Calu3 (cell line): ENCODE measurements at regions of chr18 and their contacts with region 1.

Region 1: GRCh38 chr18:74342416-74343043 is 26.9 kb downstream of the C18orf63 start:
- DNase-seq: peak; percentile 46
- H3K4me3 Mint-ChIP-seq: no peak overlapping the region
- H3K27ac Mint-ChIP-seq: peak overlapping the region; percentile 7
- H3K4me1 Mint-ChIP-seq: no peaks in the 10 kb centered on the region
- H3K27me3 Mint-ChIP-seq: no peaks in the 10 kb centered on the region
- CTCF ChIP-seq: peak; percentile 48

Region 2: GRCh38 chr18:72700961-72701718 is 1641.4 kb before region 1 on chr18:
- CTCF ChIA-PET with region 1: interaction called, 5 read pairs
- intact Hi-C with region 1: loop called (anchors 5 kb)
- DNase-seq: no peak
- H3K4me3 Mint-ChIP-seq: no peak overlapping the region
- H3K27ac Mint-ChIP-seq: no peak overlapping the region
- H3K4me1 Mint-ChIP-seq: no peaks in the 10 kb centered on the region
- H3K27me3 Mint-ChIP-seq: no peaks in the 10 kb centered on the region
- CTCF ChIP-seq: peak; percentile 54

Region 3: DNA sequence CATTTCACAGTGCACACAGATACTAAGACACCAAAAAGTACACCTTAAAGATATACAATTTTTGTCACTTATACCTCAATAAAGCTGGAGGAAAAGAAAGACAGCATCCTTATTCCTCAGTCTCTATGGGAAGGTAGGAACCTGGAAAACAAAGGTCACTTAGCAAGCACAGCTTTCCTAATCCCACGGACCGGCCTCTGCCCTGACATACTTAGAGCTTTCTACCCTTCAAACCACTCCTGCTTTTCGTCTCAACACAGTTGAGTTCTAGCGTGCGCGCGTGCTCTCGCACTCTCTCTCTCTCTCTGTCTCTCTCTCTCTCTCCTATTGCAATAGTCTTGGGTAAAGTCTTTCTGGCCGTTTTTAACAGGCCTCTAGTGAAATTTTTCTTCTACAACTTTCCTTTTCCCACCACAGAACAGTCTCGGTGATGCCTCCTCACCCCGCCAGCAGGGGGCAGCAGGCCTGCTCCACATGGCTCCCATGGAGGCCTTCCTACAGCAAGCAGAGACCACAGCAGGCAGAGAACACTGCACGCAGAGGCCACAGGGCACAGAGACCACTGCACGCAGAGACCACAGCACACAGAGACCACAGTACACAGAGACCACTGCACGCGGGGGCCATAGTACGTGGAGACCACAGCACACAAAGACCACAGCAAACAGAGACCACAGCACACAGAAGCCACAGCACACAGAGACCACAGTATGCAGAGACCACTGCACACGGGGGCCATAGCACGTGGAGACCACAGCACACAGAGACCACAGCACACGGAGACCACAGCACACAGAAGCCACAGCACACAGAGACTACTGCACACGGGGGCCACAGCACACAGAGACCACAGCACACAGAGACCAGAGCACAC is 301.8 kb before region 1 on chr18:
- CTCF ChIA-PET with region 1: no interaction called
- intact Hi-C with region 1: loop called (anchors 1 kb)
- DNase-seq: peak; percentile 78
- H3K4me3 Mint-ChIP-seq: no peak overlapping the region
- H3K27ac Mint-ChIP-seq: no peak overlapping the region
- H3K4me1 Mint-ChIP-seq: no peaks in the 10 kb centered on the region
- H3K27me3 Mint-ChIP-seq: peaks cover 5% of the 10 kb centered on the region
- CTCF ChIP-seq: peak; percentile 73

Region 4: DNA sequence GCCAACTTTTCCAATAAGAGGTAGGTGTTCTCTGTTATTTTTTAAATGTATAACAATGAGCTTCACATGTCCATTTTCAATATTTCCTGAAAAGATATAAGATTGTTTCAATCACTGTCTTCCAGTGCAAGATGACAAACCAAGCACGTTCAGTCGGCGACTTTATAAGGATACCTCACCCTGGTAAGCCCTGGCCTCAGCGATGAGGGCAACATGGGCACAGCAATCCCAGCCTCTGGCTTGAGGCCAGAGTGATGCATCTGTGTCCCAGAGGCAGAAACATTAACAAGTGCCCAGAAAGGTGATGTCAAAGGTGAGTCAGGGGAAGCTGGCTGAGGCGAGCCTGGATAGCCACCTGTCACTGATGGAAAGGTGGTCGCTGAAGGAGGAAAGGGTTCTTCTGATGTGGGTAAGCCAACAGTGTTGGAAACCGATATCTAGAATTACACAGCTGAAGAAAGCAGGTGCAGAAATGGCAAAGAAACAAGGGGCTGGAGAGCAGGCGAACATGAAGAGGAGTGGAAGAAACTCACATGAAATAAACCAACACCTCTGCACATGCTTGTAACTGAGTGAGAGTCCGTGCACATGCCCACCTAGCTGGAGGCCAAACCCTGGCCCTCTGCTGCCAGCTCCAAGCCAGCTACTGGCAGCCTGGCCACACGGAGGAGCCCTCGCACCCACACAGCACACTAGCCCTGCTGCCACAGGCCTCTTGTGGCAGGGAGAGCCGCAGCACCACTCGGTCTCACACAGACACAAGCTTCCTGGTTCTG is 260.4 kb before region 1 on chr18:
- CTCF ChIA-PET with region 1: interaction called, 12 read pairs
- intact Hi-C with region 1: loop called (anchors 2 kb)
- DNase-seq: peak; percentile 81
- H3K4me3 Mint-ChIP-seq: peak overlapping the region; percentile 32
- H3K27ac Mint-ChIP-seq: no peak overlapping the region
- H3K4me1 Mint-ChIP-seq: peaks cover 9% of the 10 kb centered on the region
- H3K27me3 Mint-ChIP-seq: no peaks in the 10 kb centered on the region
- CTCF ChIP-seq: peak; percentile 53

Region 5: GRCh38 chr18:74242438-74243096 is 100.0 kb before region 1 on chr18:
- CTCF ChIA-PET with region 1: no interaction called
- intact Hi-C with region 1: loop called (anchors 1 kb)
- DNase-seq: peak; percentile 34
- H3K4me3 Mint-ChIP-seq: peak overlapping the region; percentile 31
- H3K27ac Mint-ChIP-seq: peak overlapping the region; percentile 51
- H3K4me1 Mint-ChIP-seq: peaks cover 32% of the 10 kb centered on the region
- H3K27me3 Mint-ChIP-seq: no peaks in the 10 kb centered on the region
- CTCF ChIP-seq: no peak